T-cell (primary cell): ENCODE measurements at regions of chr14 and their contacts with region 1.

Region 1: DNA sequence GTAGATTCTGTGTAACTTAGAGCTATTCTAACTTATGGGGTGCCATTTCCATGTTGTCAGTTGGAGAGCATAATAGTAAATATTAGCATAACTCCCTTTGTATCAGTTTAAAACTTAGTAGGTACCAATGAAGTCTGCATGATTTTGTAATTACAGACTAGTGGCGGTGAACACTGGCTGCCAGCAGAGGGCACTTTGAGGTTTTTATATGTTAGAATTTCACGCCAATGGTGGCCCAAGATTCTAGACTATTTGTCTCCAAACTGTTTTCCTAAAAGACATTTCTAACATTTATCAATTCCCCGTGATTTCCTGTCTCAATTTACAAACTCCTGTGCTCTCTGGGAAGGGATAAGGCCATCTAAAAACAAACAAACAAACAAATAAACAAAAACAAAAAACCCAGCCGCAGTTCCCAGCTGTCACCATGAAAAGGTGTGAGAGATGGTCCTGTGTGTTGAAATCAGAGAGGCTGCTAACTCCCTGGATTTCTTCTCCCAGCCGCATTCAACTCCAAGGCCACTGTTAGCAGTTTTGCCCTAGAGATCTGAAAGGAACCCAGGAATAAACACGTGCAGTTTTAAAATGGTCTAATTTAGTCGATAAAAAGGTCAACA is 57.6 kb downstream of the BRMS1L start:
- DNase-seq: peak in 12 of 35 experiments; percentile 3 to 42 (median 6)
- ATAC-seq: no peak
- H3K4me3 ChIP-seq: no peak overlapping the region
- H3K4me3 Mint-ChIP-seq: no peak overlapping the region
- H3K27ac ChIP-seq: no peak overlapping the region
- H3K27ac Mint-ChIP-seq: no peak overlapping the region
- H3K4me1 ChIP-seq: no peaks in the 10 kb centered on the region
- H3K4me1 Mint-ChIP-seq: peaks cover 0 to 3% (median 0%) of the 10 kb centered on the region in 3 donors
- H3K27me3 ChIP-seq: no peaks in the 10 kb centered on the region
- H3K27me3 Mint-ChIP-seq: no peaks in the 10 kb centered on the region

Region 2: GRCh38 chr14:36070031-36070719 is 186.4 kb after region 1 on chr14:
- CTCF ChIA-PET with region 1: interaction called, 11 to 23 read pairs
- POLR2A ChIA-PET with region 1: no interaction called
- DNase-seq: peak in 1 of 35 experiments; percentile 5
- ATAC-seq: no peak
- H3K4me3 ChIP-seq: no peak overlapping the region
- H3K4me3 Mint-ChIP-seq: no peak overlapping the region
- H3K27ac ChIP-seq: no peak overlapping the region
- H3K27ac Mint-ChIP-seq: no peak overlapping the region
- H3K4me1 ChIP-seq: no peaks in the 10 kb centered on the region
- H3K4me1 Mint-ChIP-seq: peaks cover 0 to 5% (median 3%) of the 10 kb centered on the region in 3 donors
- H3K27me3 ChIP-seq: peaks cover 0 to 5% of the 10 kb centered on the region in 2 experiments
- H3K27me3 Mint-ChIP-seq: peaks cover 14 to 29% of the 10 kb centered on the region in 2 donors

Region 3: DNA sequence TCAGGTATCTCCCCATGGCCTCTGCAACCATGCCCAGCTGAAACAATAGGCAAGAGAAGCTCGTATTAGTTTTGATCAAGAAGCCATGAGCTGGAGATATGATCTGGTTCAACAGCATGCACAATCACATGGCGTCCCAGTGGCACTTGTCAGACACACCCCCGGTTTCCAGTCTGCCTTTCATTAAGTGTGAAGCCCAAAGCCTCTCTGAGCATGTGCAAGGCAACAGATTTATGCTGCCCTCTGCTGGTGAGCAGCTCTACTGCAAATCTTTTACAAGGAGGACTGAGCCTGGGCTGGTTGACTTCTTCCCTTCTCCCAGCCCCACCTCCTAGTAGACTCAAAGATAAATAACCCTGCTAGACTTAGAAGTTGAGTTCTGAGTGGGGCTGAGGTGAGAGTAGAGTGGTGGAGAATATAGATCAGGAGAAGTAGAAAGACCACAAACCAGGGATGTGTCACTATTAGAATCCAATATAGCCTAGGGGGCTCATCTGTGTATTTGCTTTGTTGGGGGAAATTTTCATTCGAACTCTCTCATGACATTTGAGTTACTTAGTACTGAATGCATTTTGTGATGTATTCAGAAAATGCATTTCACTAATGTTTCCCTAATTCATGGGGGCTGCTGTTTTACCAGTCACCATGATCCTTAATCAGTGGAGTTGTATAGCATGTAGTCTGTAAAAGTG is 490.3 kb after region 1 on chr14:
- CTCF ChIA-PET with region 1: interaction called, 9 to 18 read pairs
- POLR2A ChIA-PET with region 1: no interaction called
- DNase-seq: peak; percentile 16 to 75 (median 50)
- ATAC-seq: peak; percentile 63 to 74 (median 65)
- H3K4me3 ChIP-seq: no peak overlapping the region
- H3K4me3 Mint-ChIP-seq: no peak overlapping the region
- H3K27ac ChIP-seq: no peak overlapping the region
- H3K27ac Mint-ChIP-seq: no peak overlapping the region
- H3K4me1 ChIP-seq: no peaks in the 10 kb centered on the region
- H3K4me1 Mint-ChIP-seq: peaks cover 0 to 2% (median 2%) of the 10 kb centered on the region in 3 donors
- H3K27me3 ChIP-seq: peaks cover 0 to 3% of the 10 kb centered on the region in 2 experiments
- H3K27me3 Mint-ChIP-seq: peaks cover 0 to 17% of the 10 kb centered on the region in 2 donors